ENCODE measurements at regions of chr13 and their contacts with region 1.

Region 1: DNA sequence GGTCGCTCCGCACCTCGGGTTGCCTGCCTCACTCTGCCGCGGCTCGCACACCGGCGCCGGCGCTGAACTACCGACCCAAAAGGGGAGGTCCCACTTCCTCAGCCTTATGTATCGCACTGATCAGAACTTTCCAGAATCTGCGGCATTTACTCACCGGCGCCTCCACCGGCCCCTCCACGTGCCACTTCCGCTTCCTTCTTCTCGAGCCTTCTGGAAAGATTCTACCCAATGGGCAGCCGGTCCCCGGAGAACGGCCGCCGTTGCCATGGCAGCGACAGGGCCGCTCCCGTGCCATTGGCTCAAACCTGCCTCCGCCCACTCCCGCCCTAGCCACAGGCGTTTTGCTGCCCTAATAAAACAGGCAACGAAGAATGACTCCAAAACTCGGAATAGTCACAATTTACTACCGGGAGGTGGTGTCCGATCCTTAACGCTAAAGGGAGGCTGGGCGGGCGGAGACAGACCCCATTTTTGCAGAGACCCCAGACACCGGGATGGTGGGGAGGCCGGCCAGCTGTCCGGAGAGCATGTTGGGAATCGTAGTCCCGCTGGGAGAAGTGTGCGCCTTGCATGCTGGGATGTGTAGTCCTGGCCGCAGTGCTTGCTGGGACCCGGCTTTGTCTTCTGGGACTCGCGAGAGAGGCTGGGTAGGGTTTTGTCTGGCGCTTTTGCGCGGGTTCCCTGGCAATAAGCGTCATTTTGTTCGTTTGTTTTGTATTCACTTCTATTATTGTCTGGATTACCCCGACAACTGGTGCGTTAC is at the start of gene HSPH1:
- DNase-seq: peak; percentile 98
- H3K4me3 ChIP-seq: peak within 1 kb of the TSS; percentile 55 to 88
- H3K27ac ChIP-seq: peak within 1 kb of the TSS; percentile 92 to 100
- H3K4me1 ChIP-seq: no peaks in the 10 kb centered on the region
- H3K27me3 ChIP-seq: no peaks in the 10 kb centered on the region
- CTCF ChIP-seq: peak in 1 of 4 experiments; percentile 34
- POLR2A ChIP-seq: peak; percentile 95
- total RNA-seq, gene HSPH1: 33.5 to 60.6 TPM

Region 2: GRCh38 chr13:31199849-31200636 is 38.0 kb after region 1 on chr13 and contains the start of gene B3GLCT:
- intact Hi-C with region 1: loop called (anchors 5 kb)
- DNase-seq: peak; percentile 65
- H3K4me3 ChIP-seq: peak within 1 kb of the TSS; percentile 77 to 78
- H3K27ac ChIP-seq: peak within 1 kb of the TSS; percentile 95 to 96
- H3K4me1 ChIP-seq: no peaks in the 10 kb centered on the region
- H3K27me3 ChIP-seq: no peaks in the 10 kb centered on the region
- CTCF ChIP-seq: peak; percentile 84 to 95 (median 87)
- POLR2A ChIP-seq: peak; percentile 24
- total RNA-seq, gene B3GLCT: 4.4 to 14.7 TPM